ENCODE measurements at regions of chr17 and their contacts with region 1.

Region 1: DNA sequence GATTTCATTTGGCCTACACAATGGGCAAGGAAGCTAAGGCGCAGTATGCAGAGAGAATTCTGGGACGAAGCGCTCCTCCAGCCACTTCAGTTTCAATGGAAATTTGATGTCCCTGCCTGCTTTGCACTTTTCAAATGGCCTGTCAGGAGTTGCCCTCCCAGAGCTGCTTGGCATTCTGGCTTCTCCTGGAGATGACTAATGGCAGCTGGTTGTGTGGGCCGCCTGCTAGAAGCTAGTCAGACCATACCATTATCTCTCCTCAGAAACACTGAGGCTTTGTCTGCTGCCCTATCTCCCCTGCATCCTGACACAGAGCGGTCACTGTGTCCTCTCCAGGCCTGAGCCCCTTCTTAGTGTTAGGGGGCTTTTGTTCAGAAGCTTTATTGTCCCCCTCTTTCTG is 180.1 kb downstream of the SPECC1 start:
- DNase-seq: peak; percentile 71
- H3K4me3 Mint-ChIP-seq: no peak overlapping the region
- H3K27ac Mint-ChIP-seq: peak overlapping the region; percentile 57
- H3K4me1 Mint-ChIP-seq: peaks cover 39% of the 10 kb centered on the region
- H3K27me3 Mint-ChIP-seq: no peaks in the 10 kb centered on the region
- CTCF ChIP-seq: no peak

Region 2: DNA sequence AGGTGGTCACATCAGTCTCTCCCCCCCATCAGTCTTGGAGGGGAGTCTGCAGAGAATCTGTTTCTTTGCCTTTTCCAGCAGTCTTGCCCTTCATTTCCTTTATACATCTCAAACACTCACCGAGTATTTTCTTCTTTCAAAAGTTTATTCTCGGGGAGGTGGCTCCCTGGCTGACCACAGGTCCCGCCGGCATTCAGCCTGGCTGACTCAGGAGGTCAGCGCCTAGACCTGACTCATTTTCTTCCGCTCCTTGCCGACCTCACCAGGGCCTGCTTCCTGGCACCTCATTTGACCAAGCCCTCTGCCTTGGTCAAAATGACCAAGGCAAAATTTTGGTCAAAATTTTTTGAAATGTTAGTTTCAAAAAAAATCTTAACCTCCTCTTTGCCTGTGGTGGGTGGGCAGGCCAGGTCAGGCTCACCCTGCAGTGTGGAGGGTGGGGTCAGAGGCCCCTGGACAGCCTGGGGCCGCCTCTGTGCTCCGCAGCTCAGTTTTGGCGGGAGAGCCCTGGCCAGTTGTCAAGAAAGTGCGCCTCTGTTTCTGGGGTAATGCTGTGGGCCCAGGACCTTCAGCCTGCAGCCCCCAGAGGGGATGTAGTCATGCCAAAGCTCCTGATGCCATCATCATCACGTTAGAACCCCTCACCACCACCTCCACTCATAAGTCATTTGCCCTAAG is 14.6 kb before region 1 on chr17:
- CTCF ChIA-PET with region 1: interaction called, 4 read pairs
- POLR2A ChIA-PET with region 1: interaction called, 13 read pairs
- intact Hi-C with region 1: no loop called
- DNase-seq: peak; percentile 72
- H3K4me3 Mint-ChIP-seq: peak overlapping the region; percentile 63
- H3K27ac Mint-ChIP-seq: peak overlapping the region; percentile 97
- H3K4me1 Mint-ChIP-seq: peaks cover 33% of the 10 kb centered on the region
- H3K27me3 Mint-ChIP-seq: no peaks in the 10 kb centered on the region
- CTCF ChIP-seq: no peak

Region 3: GRCh38 chr17:20206068-20206467 is 16.8 kb after region 1 on chr17:
- CTCF ChIA-PET with region 1: interaction called, 4 read pairs
- POLR2A ChIA-PET with region 1: interaction called, 49 read pairs
- intact Hi-C with region 1: no loop called
- DNase-seq: peak; percentile 52
- H3K4me3 Mint-ChIP-seq: peak overlapping the region; percentile 11
- H3K27ac Mint-ChIP-seq: peak overlapping the region; percentile 81
- H3K4me1 Mint-ChIP-seq: peaks cover 36% of the 10 kb centered on the region
- H3K27me3 Mint-ChIP-seq: no peaks in the 10 kb centered on the region
- CTCF ChIP-seq: no peak

Measured in MCF 10A (cell line).